Activated naive CD4-positive, alpha-beta T cell treated with anti-CD3 and anti-CD28 coated beads for 36 hours (primary cell): ENCODE measurements at regions of chr10 and their contacts with region 1.

Region 1: GRCh38 chr10:95907456-95908253 is at the start of gene CC2D2B:
- DNase-seq: peak; percentile 73
- H3K4me3 Mint-ChIP-seq: peak within 1 kb of the TSS; percentile 90
- H3K27ac Mint-ChIP-seq: peak within 1 kb of the TSS; percentile 89
- H3K4me1 Mint-ChIP-seq: peaks cover 14% of the 10 kb centered on the region
- H3K27me3 Mint-ChIP-seq: no peaks in the 10 kb centered on the region
- total RNA-seq, gene CC2D2B: not detected

Region 2: DNA sequence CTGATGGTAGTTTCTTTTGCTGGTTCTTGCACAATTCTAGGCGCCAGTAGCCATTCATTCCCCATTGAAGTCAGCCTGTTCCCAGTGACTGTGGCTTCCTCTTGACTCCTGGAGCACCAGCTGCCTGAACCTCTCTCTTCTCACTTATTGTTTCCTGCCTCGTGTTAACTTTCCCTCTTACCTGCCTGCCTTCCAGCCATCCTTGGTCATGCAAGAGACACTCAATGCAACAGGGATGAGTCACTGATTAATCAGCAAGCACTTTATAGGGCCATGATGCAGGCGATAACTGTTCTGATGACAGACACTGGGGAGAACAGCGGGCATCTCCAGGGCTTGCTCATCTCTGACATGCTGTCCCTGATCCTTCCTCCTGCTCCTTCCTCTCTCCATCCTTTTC is 1791.9 kb before region 1 on chr10:
- CTCF ChIA-PET with region 1: no interaction called
- intact Hi-C with region 1: no loop called
- DNase-seq: no peak
- H3K4me3 Mint-ChIP-seq: no peak overlapping the region
- H3K27ac Mint-ChIP-seq: no peak overlapping the region
- H3K4me1 Mint-ChIP-seq: no peaks in the 10 kb centered on the region
- H3K27me3 Mint-ChIP-seq: peaks cover 5% of the 10 kb centered on the region

Region 3: DNA sequence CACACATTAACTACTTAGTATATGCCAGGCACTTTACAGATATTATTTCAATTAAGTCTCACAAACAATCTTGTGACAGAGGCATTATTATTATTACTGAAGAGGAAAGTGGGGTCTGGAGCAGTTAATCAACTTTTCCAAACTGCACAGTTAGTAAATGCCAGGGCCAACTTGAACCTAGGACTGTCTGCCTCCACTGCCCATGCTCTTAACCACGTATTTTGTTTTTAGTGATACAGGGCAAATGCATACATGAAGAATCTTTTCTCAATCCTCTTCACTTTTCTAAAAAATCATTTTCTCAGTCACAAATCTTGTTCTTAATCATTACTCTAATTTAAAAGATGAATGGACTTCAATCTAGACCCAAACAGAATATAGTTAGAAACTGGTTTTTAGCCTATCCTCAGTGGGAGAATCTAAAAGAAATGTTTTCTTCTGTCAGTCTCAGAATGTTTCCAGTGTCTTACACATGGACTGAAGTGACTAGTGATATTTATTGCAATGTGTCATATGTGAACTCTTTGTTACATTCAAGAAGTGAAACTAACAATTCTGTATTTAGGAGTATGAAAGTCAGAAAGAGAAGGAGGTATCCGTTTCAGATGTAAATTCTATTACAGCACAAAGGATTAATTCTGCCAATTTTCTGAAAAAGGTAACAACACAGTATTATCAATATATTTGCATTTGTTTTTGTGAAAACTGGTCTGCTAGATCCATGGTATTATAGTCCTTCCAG is 80.2 kb after region 1 on chr10:
- CTCF ChIA-PET with region 1: no interaction called
- intact Hi-C with region 1: loop called (anchors 2 kb)
- DNase-seq: no peak
- H3K4me3 Mint-ChIP-seq: no peak overlapping the region
- H3K27ac Mint-ChIP-seq: no peak overlapping the region
- H3K4me1 Mint-ChIP-seq: no peaks in the 10 kb centered on the region
- H3K27me3 Mint-ChIP-seq: no peaks in the 10 kb centered on the region

Region 4: DNA sequence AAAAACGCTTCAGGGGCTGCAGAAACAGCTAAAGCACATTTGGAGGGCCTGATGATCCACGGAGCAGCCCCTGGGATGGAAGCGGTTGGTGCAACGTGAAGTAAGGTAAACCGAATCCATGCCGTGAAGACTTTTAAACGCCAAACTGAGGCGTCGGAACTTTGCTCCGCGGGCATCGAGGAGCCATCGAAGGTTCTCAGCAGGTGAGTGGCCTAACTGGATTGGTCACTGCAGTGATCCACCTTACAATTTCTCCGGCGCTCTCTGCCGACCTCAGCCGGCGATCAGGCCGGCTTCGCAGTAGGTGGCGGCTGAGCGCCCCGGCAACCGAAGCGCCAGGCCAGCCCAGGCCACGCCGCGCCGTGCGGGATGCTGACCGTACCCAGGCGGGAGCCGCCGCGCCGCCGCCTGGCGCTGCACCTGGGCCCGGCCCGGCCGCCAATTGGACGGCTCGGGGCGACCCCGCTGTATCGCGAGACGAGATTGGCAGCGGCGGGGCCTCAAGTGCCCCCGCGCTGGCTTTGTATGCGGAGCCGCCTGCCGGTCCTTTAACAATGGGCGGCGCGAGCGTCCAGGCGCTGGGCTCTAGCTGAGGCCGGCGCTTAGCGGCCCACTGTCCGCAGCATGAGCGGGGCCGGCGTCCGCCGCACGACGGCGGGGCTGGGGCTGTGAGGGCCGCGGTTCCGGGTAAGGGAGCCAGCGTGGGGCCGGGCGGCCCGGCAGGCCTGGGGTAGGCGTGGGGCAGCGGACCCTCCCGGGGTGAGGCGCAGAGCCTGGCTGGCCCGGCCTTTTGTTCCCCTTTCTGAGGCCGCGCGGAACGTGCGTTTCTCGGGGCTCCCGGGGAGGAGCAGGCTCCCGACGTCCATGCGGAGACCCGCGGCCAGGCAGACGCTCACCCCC is 135.6 kb after region 1 on chr10 and contains the start of gene CCNJ:
- CTCF ChIA-PET with region 1: no interaction called
- intact Hi-C with region 1: loop called (anchors 1 kb)
- DNase-seq: peak; percentile 85
- H3K4me3 Mint-ChIP-seq: peak within 1 kb of the TSS; percentile 88
- H3K27ac Mint-ChIP-seq: peak within 1 kb of the TSS; percentile 71
- H3K4me1 Mint-ChIP-seq: peaks cover 35% of the 10 kb centered on the region
- H3K27me3 Mint-ChIP-seq: peaks cover 4% of the 10 kb centered on the region
- total RNA-seq, gene CCNJ: 3.2 to 3.6 TPM

Region 5: DNA sequence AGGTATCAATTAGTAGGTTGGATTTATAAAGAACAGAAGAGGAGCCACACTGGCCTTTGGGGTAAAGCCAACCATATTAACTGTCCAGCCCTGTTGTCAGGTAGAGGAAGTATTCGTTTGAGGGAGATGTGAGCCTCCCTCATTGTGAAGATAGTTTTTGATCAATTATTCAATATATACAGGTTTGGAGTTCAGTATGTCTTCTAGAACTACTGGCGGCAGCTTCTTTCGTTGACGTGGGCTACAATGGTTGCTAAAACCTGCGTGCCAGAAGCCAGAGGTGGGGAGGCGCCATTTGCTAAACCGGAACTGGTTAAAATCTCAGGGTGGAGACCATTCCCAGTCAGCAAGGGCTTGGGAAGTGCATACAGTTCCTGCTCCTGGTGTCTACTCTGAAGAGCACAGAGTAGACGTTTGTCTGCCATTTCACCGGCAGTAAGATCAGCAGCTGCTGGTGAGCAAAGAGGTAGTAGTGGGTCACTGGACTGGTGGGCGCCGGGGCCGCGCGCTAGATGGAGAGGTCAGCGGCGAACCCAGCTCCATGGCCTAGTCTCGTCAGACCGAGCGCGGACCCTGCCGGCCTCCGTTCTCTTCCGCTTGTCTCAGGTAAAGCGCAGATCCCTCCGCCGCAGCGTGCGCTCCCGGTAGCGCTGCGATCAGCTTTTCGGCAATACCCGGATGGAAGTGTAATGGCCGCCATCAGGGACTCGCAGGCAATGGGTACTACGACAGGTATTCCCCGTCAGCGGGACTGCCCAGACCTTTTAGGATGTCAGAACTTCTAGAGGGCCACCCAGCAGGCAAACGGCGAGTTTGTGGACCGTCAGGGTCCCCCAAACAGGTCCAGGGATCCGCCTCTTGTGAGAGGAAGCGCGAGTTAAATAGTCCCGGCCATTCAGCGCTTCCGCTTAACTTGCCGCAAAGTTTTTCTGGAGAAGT is 222.0 kb after region 1 on chr10 and contains the start of gene ZNF518A:
- CTCF ChIA-PET with region 1: no interaction called
- intact Hi-C with region 1: loop called (anchors 1 kb)
- DNase-seq: peak; percentile 91
- H3K4me3 Mint-ChIP-seq: peak within 1 kb of the TSS; percentile 97
- H3K27ac Mint-ChIP-seq: peak within 1 kb of the TSS; percentile 99
- H3K4me1 Mint-ChIP-seq: peaks cover 13% of the 10 kb centered on the region
- H3K27me3 Mint-ChIP-seq: peaks cover 30% of the 10 kb centered on the region
- total RNA-seq, gene ZNF518A: 10.7 to 12.1 TPM

Region 6: GRCh38 chr10:96339957-96340904 is 432.6 kb after region 1 on chr10:
- CTCF ChIA-PET with region 1: no interaction called
- intact Hi-C with region 1: loop called (anchors 1 kb)
- DNase-seq: peak; percentile 83
- H3K4me3 Mint-ChIP-seq: no peak overlapping the region
- H3K27ac Mint-ChIP-seq: no peak overlapping the region
- H3K4me1 Mint-ChIP-seq: peaks cover 6% of the 10 kb centered on the region
- H3K27me3 Mint-ChIP-seq: no peaks in the 10 kb centered on the region